AG04450 (cell line): ENCODE measurements at regions of chr15 and their contacts with region 1.

Region 1: GRCh38 chr15:52256366-52256765 is 39.2 kb downstream of the MYO5C start:
- DNase-seq: peak; percentile 50
- H3K4me3 ChIP-seq: no peak overlapping the region
- H3K27ac ChIP-seq: no peak overlapping the region
- H3K27me3 ChIP-seq: no peaks in the 10 kb centered on the region
- CTCF ChIP-seq: peak; percentile 81

Region 2: GRCh38 chr15:51842852-51843737 is 413.3 kb before region 1 on chr15:
- CTCF ChIA-PET with region 1: no interaction called
- POLR2A ChIA-PET with region 1: no interaction called
- DNase-seq: no peak
- H3K4me3 ChIP-seq: no peak overlapping the region
- H3K27ac ChIP-seq: no peak overlapping the region
- H3K27me3 ChIP-seq: no peaks in the 10 kb centered on the region
- CTCF ChIP-seq: no peak

Region 3: GRCh38 chr15:52220937-52221660 is 35.3 kb before region 1 on chr15:
- CTCF ChIA-PET with region 1: no interaction called
- POLR2A ChIA-PET with region 1: no interaction called
- DNase-seq: no peak
- H3K4me3 ChIP-seq: no peak overlapping the region
- H3K27ac ChIP-seq: no peak overlapping the region
- H3K27me3 ChIP-seq: peaks cover 12% of the 10 kb centered on the region
- CTCF ChIP-seq: no peak

Region 4: DNA sequence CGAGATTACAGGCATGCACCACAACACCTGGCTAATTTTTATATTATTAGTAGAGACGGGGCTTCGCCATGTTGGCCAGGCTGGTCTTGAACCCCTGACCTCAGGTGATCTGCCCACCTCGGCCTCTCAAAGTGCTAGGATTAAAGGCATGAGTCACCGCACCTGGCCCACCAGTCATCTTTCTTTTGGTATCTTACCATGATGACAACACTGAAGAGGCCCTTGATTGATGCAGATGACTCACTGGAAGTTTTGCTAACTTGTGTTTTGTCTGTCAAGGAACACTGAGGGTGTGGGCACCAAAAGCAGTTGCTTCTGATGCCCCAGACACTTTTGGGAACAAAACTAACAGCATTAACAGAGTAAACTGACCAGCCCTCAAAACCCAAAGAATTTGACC is 184.0 kb after region 1 on chr15:
- CTCF ChIA-PET with region 1: no interaction called
- POLR2A ChIA-PET with region 1: no interaction called
- DNase-seq: no peak
- H3K4me3 ChIP-seq: no peak overlapping the region
- H3K27ac ChIP-seq: no peak overlapping the region
- H3K27me3 ChIP-seq: no peaks in the 10 kb centered on the region
- CTCF ChIP-seq: no peak

Region 5: GRCh38 chr15:52636459-52636858 is 380.1 kb after region 1 on chr15:
- CTCF ChIA-PET with region 1: interaction called, 10 read pairs
- POLR2A ChIA-PET with region 1: no interaction called
- DNase-seq: peak; percentile 41
- H3K4me3 ChIP-seq: no peak overlapping the region
- H3K27ac ChIP-seq: no peak overlapping the region
- H3K27me3 ChIP-seq: no peaks in the 10 kb centered on the region
- CTCF ChIP-seq: no peak

Region 6: GRCh38 chr15:52735231-52736089 is 479.1 kb after region 1 on chr15:
- CTCF ChIA-PET with region 1: interaction called, 36 read pairs
- POLR2A ChIA-PET with region 1: no interaction called
- DNase-seq: peak; percentile 38
- H3K4me3 ChIP-seq: no peak overlapping the region
- H3K27ac ChIP-seq: no peak overlapping the region
- H3K27me3 ChIP-seq: no peaks in the 10 kb centered on the region
- CTCF ChIP-seq: peak; percentile 72